ENCODE measurements at regions of chr17 and their contacts with region 1.

Region 1: DNA sequence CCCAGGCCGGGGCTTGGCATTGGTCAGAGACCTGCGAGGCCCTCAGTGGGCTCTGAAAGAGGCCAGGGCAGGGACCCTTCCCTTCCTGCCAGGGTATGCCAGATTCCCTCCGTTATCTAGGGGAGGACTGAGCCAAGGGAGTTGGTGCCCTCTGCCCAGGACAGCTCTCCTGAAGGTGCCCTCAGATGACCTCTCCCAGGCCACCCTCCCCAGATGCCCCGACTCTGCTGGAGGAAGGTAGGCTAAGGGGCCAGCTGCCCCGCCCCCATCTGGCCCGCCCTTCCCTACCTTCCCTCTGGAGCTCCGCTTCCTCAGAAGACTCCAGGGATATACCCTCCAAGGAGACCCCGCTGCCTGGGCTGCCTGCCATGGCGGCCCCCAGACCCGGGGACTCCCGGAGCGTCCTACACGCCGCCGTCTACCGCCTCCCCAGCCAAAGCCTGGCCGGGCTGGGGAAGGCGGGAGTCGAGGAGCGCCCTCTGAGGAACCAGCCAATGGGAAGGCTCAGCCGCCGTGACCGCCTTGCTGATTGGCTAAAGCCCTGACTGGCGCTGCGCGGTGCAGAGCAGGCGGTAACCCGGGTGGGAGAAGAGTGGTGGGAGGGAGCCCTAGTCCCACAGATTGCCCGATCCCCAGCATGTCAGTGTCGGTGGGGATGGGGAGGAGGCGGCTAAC is 7.0 kb downstream of the MPP2 start:
- DNase-seq: peak; percentile 95
- H3K4me3 ChIP-seq: peak overlapping the region; percentile 51 to 63 (median 54)
- H3K27ac ChIP-seq: no peak overlapping the region
- H3K4me1 ChIP-seq: peaks cover 18 to 35% (median 24%) of the 10 kb centered on the region in 4 donors
- H3K27me3 ChIP-seq: peaks cover 0 to 2% (median 0%) of the 10 kb centered on the region in 4 donors
- CTCF ChIP-seq: no peak
- EP300 ChIP-seq: no peak
- POLR2A ChIP-seq: no peak

Region 2: GRCh38 chr17:43477832-43478634 is 422.3 kb before region 1 on chr17:
- intact Hi-C with region 1: no loop called
- DNase-seq: no peak
- H3K4me3 ChIP-seq: no peak overlapping the region
- H3K27ac ChIP-seq: no peak overlapping the region
- H3K4me1 ChIP-seq: peaks cover 1 to 6% (median 5%) of the 10 kb centered on the region in 4 donors
- H3K27me3 ChIP-seq: no peaks in the 10 kb centered on the region
- CTCF ChIP-seq: no peak
- EP300 ChIP-seq: no peak
- POLR2A ChIP-seq: no peak

Region 3: GRCh38 chr17:43966271-43966670 is 66.0 kb after region 1 on chr17:
- intact Hi-C with region 1: no loop called
- DNase-seq: no peak
- H3K4me3 ChIP-seq: no peak overlapping the region
- H3K27ac ChIP-seq: no peak overlapping the region
- H3K4me1 ChIP-seq: peaks cover 0 to 8% (median 0%) of the 10 kb centered on the region in 4 donors
- H3K27me3 ChIP-seq: peaks cover 0 to 17% (median 0%) of the 10 kb centered on the region in 4 donors
- CTCF ChIP-seq: no peak
- EP300 ChIP-seq: no peak
- POLR2A ChIP-seq: no peak

Region 4: DNA sequence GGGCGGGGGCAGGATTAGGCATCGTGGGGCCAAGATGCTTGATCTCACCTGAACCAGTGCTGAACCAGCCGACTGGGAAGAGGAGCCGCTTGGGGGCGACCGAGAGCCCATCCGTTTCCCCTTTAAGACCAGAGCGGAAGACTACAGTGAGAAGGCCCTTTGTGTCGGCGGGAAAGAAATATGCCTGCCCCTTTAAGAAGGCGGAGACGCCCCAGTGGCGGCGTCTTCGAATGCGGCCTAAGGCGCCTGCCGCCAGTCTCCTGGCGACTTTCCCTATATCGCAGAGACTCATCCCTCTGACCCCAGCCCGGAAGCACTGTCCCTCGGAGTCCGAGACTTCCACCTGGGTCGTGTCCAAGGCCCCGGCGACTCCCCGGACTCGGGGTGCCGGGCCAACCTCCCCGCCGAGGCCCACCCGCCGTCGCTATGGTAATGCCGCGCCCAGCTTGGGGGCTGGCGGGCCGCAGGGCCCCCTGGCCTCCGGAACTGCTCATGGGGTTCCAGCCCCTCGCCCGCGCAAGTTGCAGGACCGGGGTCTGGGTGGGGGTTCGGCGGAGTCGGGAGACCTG is 241.5 kb after region 1 on chr17 and contains the start of gene HROB:
- intact Hi-C with region 1: loop called (anchors 10 kb)
- DNase-seq: peak; percentile 98
- H3K4me3 ChIP-seq: peak within 1 kb of the TSS; percentile 56 to 73 (median 68)
- H3K27ac ChIP-seq: peak within 1 kb of the TSS; percentile 67 to 81 (median 76)
- H3K4me1 ChIP-seq: peaks cover 25 to 66% (median 60%) of the 10 kb centered on the region in 4 donors
- H3K27me3 ChIP-seq: peaks cover 0 to 16% (median 0%) of the 10 kb centered on the region in 4 donors
- CTCF ChIP-seq: peak; percentile 86 to 94 (median 89)
- EP300 ChIP-seq: no peak
- POLR2A ChIP-seq: no peak
- total RNA-seq, gene HROB: 1.7 to 4.6 (median 2.6) TPM